ENCODE measurements at regions of chr19 and their contacts with region 1.

Region 1: GRCh38 chr19:18328340-18329034 is 5.6 kb upstream of the LSM4 start:
- DNase-seq: peak; percentile 92 to 94
- H3K4me3 ChIP-seq: peak overlapping the region; percentile 35
- H3K4me3 Mint-ChIP-seq: peak overlapping the region; percentile 71
- H3K27ac Mint-ChIP-seq: peak overlapping the region; percentile 74
- H3K4me1 ChIP-seq: peaks cover 7% of the 10 kb centered on the region; the same call in 1 of the 2 replicates
- H3K4me1 Mint-ChIP-seq: peaks cover 12% of the 10 kb centered on the region
- H3K27me3 ChIP-seq: no peaks in the 10 kb centered on the region
- H3K27me3 Mint-ChIP-seq: no peaks in the 10 kb centered on the region
- CTCF ChIP-seq: peak; percentile 84 to 85

Region 2: GRCh38 chr19:18203863-18204393 is 124.6 kb before region 1 on chr19 and contains the start of gene RAB3A:
- CTCF ChIA-PET with region 1: interaction called, 15 read pairs
- POLR2A ChIA-PET with region 1: interaction called, 3 read pairs
- intact Hi-C with region 1: no loop called
- DNase-seq: peak; percentile 99
- H3K4me3 ChIP-seq: peak within 1 kb of the TSS; percentile 90
- H3K4me3 Mint-ChIP-seq: peak within 1 kb of the TSS; percentile 90
- H3K27ac Mint-ChIP-seq: peak within 1 kb of the TSS; percentile 87
- H3K4me1 ChIP-seq: peaks cover 5% of the 10 kb centered on the region; the same call in 1 of the 2 replicates
- H3K4me1 Mint-ChIP-seq: no peaks in the 10 kb centered on the region
- H3K27me3 ChIP-seq: no peaks in the 10 kb centered on the region
- H3K27me3 Mint-ChIP-seq: no peaks in the 10 kb centered on the region
- CTCF ChIP-seq: no peak
- total RNA-seq, gene RAB3A: 2.3 and 3.9 TPM in 2 replicates

Region 3: GRCh38 chr19:18274781-18275356 is 53.6 kb before region 1 on chr19:
- CTCF ChIA-PET with region 1: interaction called, 155 read pairs
- POLR2A ChIA-PET with region 1: interaction called, 120 read pairs
- intact Hi-C with region 1: loop called (anchors 1 kb)
- DNase-seq: peak; percentile 73 to 75
- H3K4me3 ChIP-seq: no peak overlapping the region
- H3K4me3 Mint-ChIP-seq: peak overlapping the region; percentile 24
- H3K27ac Mint-ChIP-seq: peak overlapping the region; percentile 59
- H3K4me1 ChIP-seq: peaks cover 30% of the 10 kb centered on the region
- H3K4me1 Mint-ChIP-seq: peaks cover 12% of the 10 kb centered on the region
- H3K27me3 ChIP-seq: no peaks in the 10 kb centered on the region
- H3K27me3 Mint-ChIP-seq: peaks cover 6% of the 10 kb centered on the region
- CTCF ChIP-seq: no peak

Region 4: GRCh38 chr19:18340190-18340989 is 11.9 kb after region 1 on chr19 and contains the start of gene PGPEP1:
- CTCF ChIA-PET with region 1: interaction called, 27 read pairs
- POLR2A ChIA-PET with region 1: interaction called, 5 read pairs
- intact Hi-C with region 1: no loop called
- DNase-seq: peak; percentile 57 to 82
- H3K4me3 ChIP-seq: peak within 1 kb of the TSS; percentile 71
- H3K4me3 Mint-ChIP-seq: peak within 1 kb of the TSS; percentile 70
- H3K27ac Mint-ChIP-seq: peak within 1 kb of the TSS; percentile 60
- H3K4me1 ChIP-seq: peaks cover 4% of the 10 kb centered on the region
- H3K4me1 Mint-ChIP-seq: peaks cover 7% of the 10 kb centered on the region
- H3K27me3 ChIP-seq: no peaks in the 10 kb centered on the region
- H3K27me3 Mint-ChIP-seq: no peaks in the 10 kb centered on the region
- CTCF ChIP-seq: no peak
- total RNA-seq, gene PGPEP1: 25.6 and 26.0 TPM in 2 replicates

Measured in Caco-2 (cell line).